ENCODE measurements at regions of chr14 and their contacts with region 1.

Region 1: DNA sequence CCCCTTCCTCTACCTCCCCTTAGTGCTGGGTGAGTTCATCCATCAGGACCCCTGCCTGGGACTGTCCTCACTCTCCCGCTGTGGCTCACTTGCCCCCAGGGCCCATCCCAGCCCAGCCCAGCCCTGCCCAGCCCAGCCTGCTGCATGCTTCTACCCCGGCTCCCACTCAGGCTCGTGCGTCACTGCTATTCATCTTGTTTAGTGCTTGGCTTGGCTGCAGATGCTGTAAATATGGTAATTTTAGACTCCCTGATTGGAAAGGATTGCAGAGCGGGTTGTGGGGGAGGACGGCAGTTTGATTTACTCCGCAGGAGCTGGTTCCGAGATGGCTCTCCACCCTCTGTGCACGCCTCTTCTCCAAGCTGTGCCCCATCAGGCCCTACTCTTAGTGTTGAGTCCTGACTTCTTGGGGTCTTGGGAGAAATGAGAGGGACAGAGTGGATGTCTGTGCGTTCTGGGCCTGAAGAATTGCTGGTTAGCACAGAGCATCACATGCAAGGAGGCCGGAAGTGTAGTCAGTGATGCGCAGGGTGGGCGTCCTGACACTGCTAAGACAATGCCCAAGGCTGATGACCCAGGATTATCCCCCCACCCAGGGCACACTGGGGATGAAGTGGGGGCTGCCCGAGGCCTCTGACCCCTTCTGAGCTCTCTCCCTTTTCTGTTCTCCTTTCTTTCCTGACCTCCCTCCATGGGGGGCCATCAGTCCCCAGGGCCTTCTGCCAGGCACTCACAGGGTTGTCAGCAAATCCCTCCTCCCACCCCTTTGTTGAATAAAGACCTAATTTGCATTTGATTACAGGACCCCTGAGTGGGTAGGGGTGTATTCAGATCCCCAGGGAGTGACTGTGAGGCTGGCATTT is 244.4 kb downstream of the ZFP36L1 start:
- DNase-seq: peak; percentile 77 to 86
- H3K4me3 ChIP-seq: no peak overlapping the region
- H3K27ac ChIP-seq: peak overlapping the region; percentile 96
- H3K4me1 ChIP-seq: peaks cover 70% of the 10 kb centered on the region
- H3K27me3 ChIP-seq: no peaks in the 10 kb centered on the region
- CTCF ChIP-seq: no peak

Region 2: GRCh38 chr14:67704484-67705089 is 843.8 kb before region 1 on chr14:
- CTCF ChIA-PET with region 1: no interaction called
- POLR2A ChIA-PET with region 1: no interaction called
- intact Hi-C with region 1: no loop called
- DNase-seq: peak; percentile 51 to 66
- H3K4me3 ChIP-seq: no peak overlapping the region
- H3K27ac ChIP-seq: no peak overlapping the region
- H3K4me1 ChIP-seq: peaks cover 24% of the 10 kb centered on the region
- H3K27me3 ChIP-seq: no peaks in the 10 kb centered on the region
- CTCF ChIP-seq: peak; percentile 82

Region 3: DNA sequence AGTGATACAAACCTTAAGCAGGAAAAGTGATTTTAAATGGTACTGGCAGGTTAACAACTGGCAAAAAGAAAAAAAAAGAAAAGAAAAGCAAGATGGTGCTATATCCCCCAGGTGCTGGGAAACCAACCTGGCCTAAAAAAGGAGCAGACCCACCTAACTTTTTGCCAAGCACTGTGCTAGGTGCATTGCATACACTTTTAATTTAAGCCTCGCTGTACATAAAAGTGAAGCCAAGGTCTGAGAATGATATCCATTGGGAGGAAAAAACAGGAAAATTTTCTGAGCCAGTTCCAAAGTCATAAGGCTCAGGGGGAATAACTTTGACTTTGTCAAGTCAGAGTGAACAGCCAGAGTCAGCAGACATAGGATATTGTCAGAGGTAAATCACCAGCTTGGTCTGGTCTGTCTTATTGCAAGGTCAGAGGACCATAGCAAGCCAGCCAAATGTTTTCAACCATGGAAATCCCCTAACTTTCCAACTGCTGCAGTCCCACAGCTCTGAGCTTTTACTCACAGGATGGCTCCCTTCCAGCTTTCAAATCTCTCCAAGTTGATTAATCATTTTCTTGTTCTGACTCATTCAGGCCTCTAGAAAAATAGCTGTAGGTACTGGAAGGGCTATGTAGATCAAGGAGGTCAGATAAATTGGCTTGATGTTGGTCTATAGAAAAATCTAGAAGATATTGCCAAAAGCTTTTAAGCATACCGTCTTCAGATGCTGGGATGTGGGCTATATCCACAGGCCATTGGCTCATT is 315.9 kb before region 1 on chr14:
- CTCF ChIA-PET with region 1: no interaction called
- POLR2A ChIA-PET with region 1: interaction called, 27 read pairs
- intact Hi-C with region 1: no loop called
- DNase-seq: peak; percentile 72 to 96
- H3K4me3 ChIP-seq: no peak overlapping the region
- H3K27ac ChIP-seq: peak overlapping the region; percentile 91
- H3K4me1 ChIP-seq: peaks cover 44% of the 10 kb centered on the region
- H3K27me3 ChIP-seq: no peaks in the 10 kb centered on the region
- CTCF ChIP-seq: no peak

Region 4: DNA sequence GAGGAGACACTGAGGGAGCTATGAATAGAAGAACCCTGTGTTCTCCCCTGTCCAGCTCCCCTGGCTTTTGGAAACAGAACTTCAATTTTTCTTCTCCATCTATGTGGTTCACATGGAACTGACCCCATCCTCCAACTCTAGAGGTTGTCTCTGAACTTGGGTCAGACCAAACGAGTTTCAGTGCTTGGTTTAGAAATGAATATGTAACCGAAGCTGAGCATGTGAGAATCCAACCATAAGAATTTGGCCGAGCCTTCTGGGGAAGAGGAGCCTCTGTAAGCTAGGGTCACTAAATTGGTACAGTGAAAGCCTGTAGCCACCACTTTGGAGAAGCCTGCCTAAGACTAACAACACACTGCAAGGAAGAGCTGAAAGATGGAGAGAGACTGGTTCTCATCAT is 219.9 kb before region 1 on chr14:
- CTCF ChIA-PET with region 1: no interaction called
- POLR2A ChIA-PET with region 1: no interaction called
- intact Hi-C with region 1: no loop called
- DNase-seq: no peak
- H3K4me3 ChIP-seq: no peak overlapping the region
- H3K27ac ChIP-seq: no peak overlapping the region
- H3K4me1 ChIP-seq: no peaks in the 10 kb centered on the region
- H3K27me3 ChIP-seq: no peaks in the 10 kb centered on the region
- CTCF ChIP-seq: no peak

Region 5: DNA sequence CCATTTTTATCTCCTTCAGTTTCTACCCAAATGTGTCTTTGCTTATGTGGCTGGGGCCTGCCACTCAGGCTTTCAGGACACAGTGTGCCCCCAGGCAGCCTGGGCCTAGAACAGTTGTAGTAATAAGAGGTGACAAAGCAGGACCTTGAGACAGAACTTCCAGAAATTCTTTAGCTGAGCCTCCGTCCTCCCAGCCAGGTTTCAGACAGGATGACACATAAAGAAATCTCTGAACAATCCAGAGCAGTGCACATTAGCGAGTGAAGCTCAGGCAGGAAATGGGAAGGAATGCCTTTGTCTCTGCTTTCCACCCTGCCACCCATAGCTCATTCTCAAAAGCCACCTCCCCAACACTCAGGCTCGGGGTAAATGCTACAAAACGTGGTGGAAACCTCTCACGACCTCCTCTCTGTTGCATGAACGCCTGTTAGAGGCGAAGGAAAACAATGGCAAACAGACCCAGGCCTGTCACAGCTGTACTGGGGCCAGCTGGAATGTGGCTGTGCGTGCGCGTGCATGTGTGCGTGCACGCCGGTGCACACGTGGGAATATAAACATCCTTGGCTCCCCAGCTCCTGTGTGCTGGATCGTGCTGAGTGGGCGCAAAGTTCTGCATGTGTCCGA is 42.3 kb before region 1 on chr14:
- CTCF ChIA-PET with region 1: no interaction called
- POLR2A ChIA-PET with region 1: no interaction called
- intact Hi-C with region 1: loop called (anchors 1 kb)
- DNase-seq: peak; percentile 52 to 58
- H3K4me3 ChIP-seq: no peak overlapping the region
- H3K27ac ChIP-seq: no peak overlapping the region
- H3K4me1 ChIP-seq: peaks cover 18% of the 10 kb centered on the region; the same call in 1 of the 2 replicates
- H3K27me3 ChIP-seq: no peaks in the 10 kb centered on the region
- CTCF ChIP-seq: no peak

Region 6: DNA sequence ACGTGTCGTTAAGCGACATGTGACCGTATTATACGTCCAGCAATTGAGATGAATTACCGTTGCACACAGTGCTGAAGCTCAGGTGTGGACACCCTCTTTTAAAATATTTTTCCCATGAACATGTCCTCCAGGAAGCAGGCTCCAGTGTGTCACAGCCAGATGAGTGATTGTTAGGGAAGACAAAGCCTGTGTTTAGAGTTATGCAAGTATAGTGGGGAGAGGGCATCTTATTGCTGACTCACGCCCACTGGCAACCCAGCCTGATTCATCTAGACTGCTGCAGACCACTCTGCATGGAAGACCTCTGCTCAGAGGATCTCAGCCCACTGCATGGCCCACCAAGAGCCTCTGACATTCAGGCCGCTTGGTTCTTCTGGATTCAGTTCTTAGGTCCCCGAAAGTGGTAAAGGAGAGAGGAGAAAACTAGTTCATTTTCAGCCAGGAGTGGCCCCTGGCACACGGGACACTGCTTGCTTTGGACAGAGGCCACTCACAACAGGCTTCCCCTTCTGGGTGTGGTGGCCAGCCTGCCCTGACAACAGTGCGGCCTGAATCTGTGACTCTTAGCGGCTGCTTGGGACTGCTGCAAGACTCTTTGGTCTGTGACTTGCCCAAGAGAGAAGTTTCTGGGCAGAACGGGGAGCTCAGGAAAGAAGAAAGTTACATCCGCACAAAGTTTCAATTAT is 21.9 kb before region 1 on chr14:
- CTCF ChIA-PET with region 1: interaction called, 4 read pairs
- POLR2A ChIA-PET with region 1: interaction called, 10 read pairs
- intact Hi-C with region 1: loop called (anchors 1 kb)
- DNase-seq: peak; percentile 71 to 74
- H3K4me3 ChIP-seq: no peak overlapping the region
- H3K27ac ChIP-seq: peak overlapping the region; percentile 87
- H3K4me1 ChIP-seq: peaks cover 45% of the 10 kb centered on the region
- H3K27me3 ChIP-seq: no peaks in the 10 kb centered on the region
- CTCF ChIP-seq: no peak

Region 7: GRCh38 chr14:68563246-68564131 is 15.1 kb after region 1 on chr14:
- CTCF ChIA-PET with region 1: no interaction called
- POLR2A ChIA-PET with region 1: interaction called, 24 read pairs
- intact Hi-C with region 1: no loop called
- DNase-seq: peak in 1 of 2 experiments; percentile 90
- H3K4me3 ChIP-seq: peak overlapping the region; percentile 64
- H3K27ac ChIP-seq: peak overlapping the region; percentile 96
- H3K4me1 ChIP-seq: peaks cover 73% of the 10 kb centered on the region
- H3K27me3 ChIP-seq: no peaks in the 10 kb centered on the region
- CTCF ChIP-seq: no peak

Region 8: GRCh38 chr14:68788996-68789820 is 240.8 kb after region 1 on chr14:
- CTCF ChIA-PET with region 1: no interaction called
- POLR2A ChIA-PET with region 1: interaction called, 14 read pairs
- intact Hi-C with region 1: loop called (anchors 1 kb)
- DNase-seq: peak; percentile 77 to 88
- H3K4me3 ChIP-seq: peak overlapping the region; percentile 95
- H3K27ac ChIP-seq: peak overlapping the region; percentile 98
- H3K4me1 ChIP-seq: peaks cover 45% of the 10 kb centered on the region
- H3K27me3 ChIP-seq: no peaks in the 10 kb centered on the region
- CTCF ChIP-seq: peak; percentile 80